ENCODE measurements at regions of chr2 and their contacts with region 1.

Region 1: GRCh38 chr2:9630749-9631483 is at the start of gene YWHAQ:
- DNase-seq: peak; percentile 99
- ATAC-seq: peak; percentile 88 to 94
- H3K4me3 ChIP-seq: peak within 1 kb of the TSS; percentile 93
- H3K27ac ChIP-seq: peak within 1 kb of the TSS; percentile 96 to 97
- H3K4me1 ChIP-seq: peaks cover 40% of the 10 kb centered on the region
- CTCF ChIP-seq: no peak
- EP300 ChIP-seq: no peak
- POLR2A ChIP-seq: peak; percentile 98
- RAD21 ChIP-seq: peak; percentile 22 to 40; a peak in 3 of 5 replicates
- polyA plus RNA-seq, gene YWHAQ: 672 and 833 TPM in 2 replicates

Region 2: GRCh38 chr2:9441556-9441955 is 189.4 kb before region 1 on chr2:
- CTCF ChIA-PET with region 1: no interaction called
- POLR2A ChIA-PET with region 1: no interaction called
- DNase-seq: no peak
- ATAC-seq: no peak
- H3K4me3 ChIP-seq: no peak overlapping the region
- H3K27ac ChIP-seq: no peak overlapping the region
- H3K4me1 ChIP-seq: peaks cover 6% of the 10 kb centered on the region; the same call in 1 of the 3 replicates
- CTCF ChIP-seq: no peak
- EP300 ChIP-seq: no peak
- POLR2A ChIP-seq: no peak
- RAD21 ChIP-seq: no peak

Region 3: GRCh38 chr2:9555297-9556141 is 75.4 kb before region 1 on chr2 and contains the start of gene ADAM17:
- CTCF ChIA-PET with region 1: interaction called, 9 read pairs
- POLR2A ChIA-PET with region 1: interaction called, 54 read pairs
- DNase-seq: peak; percentile 84 to 98
- ATAC-seq: peak; percentile 90 to 92
- H3K4me3 ChIP-seq: peak within 1 kb of the TSS; percentile 78
- H3K27ac ChIP-seq: peak within 1 kb of the TSS; percentile 95 to 98
- H3K4me1 ChIP-seq: peaks cover 56% of the 10 kb centered on the region
- CTCF ChIP-seq: peak; percentile 58
- EP300 ChIP-seq: no peak
- POLR2A ChIP-seq: peak; percentile 87
- RAD21 ChIP-seq: peak; percentile 47 to 57; a peak in 4 of 5 replicates
- polyA plus RNA-seq, gene ADAM17: 33.0 and 33.1 TPM in 2 replicates

Region 4: DNA sequence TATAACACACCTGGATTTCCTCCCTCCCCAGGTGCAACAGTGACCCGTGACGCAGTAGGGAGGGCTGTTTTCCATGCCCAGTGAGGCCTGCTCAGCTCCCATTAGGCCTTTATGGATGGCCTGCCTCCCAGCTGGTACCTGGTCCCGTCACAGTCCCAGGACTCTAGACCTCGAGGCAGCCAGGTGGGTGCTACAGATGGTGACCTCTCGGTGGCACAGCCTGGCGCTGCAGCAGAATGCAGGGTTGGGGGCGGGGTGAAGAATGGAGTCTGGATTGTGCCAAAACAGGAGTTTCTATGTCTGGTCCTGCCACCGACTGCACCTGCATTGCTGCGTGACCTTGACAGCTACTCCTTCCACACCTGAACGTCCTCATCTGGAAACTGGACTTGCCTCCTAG is 17.9 kb after region 1 on chr2:
- CTCF ChIA-PET with region 1: interaction called, 4 read pairs
- POLR2A ChIA-PET with region 1: interaction called, 62 read pairs
- DNase-seq: no peak
- ATAC-seq: no peak
- H3K4me3 ChIP-seq: no peak overlapping the region
- H3K27ac ChIP-seq: no peak overlapping the region; a peak in 1 of 6 replicates
- H3K4me1 ChIP-seq: peaks cover 7% of the 10 kb centered on the region; the same call in 1 of the 3 replicates
- CTCF ChIP-seq: no peak
- EP300 ChIP-seq: no peak
- POLR2A ChIP-seq: no peak
- RAD21 ChIP-seq: no peak

Region 5: GRCh38 chr2:9665898-9666297 is 35.0 kb after region 1 on chr2:
- CTCF ChIA-PET with region 1: interaction called, 4 read pairs
- POLR2A ChIA-PET with region 1: interaction called, 19 read pairs
- DNase-seq: peak in 1 of 2 experiments; percentile 68
- ATAC-seq: peak; percentile 60 to 79
- H3K4me3 ChIP-seq: no peak overlapping the region
- H3K27ac ChIP-seq: peak overlapping the region; percentile 59 to 71
- H3K4me1 ChIP-seq: peaks cover 27% of the 10 kb centered on the region
- CTCF ChIP-seq: no peak
- EP300 ChIP-seq: peak in 1 of 2 experiments; percentile 56; a peak in 1 of 5 replicates
- POLR2A ChIP-seq: no peak
- RAD21 ChIP-seq: peak; percentile 21 to 34; a peak in 1 of 5 replicates

Region 6: GRCh38 chr2:9703085-9703641 is 72.2 kb after region 1 on chr2:
- CTCF ChIA-PET with region 1: interaction called, 4 read pairs
- POLR2A ChIA-PET with region 1: interaction called, 44 read pairs
- DNase-seq: peak; percentile 90 to 97
- ATAC-seq: peak; percentile 87 to 88
- H3K4me3 ChIP-seq: peak overlapping the region; percentile 17; the same call in 1 of the 3 replicates
- H3K27ac ChIP-seq: peak overlapping the region; percentile 91 to 95
- H3K4me1 ChIP-seq: peaks cover 48% of the 10 kb centered on the region
- CTCF ChIP-seq: peak; percentile 17; the same call in 1 of the 3 replicates
- EP300 ChIP-seq: peak in 1 of 2 experiments; percentile 4; a peak in 1 of 5 replicates
- POLR2A ChIP-seq: no peak
- RAD21 ChIP-seq: peak; percentile 47 to 51; a peak in 4 of 5 replicates